IMR-90 (cell line): ENCODE measurements at regions of chr5 and their contacts with region 1.

Region 1: DNA sequence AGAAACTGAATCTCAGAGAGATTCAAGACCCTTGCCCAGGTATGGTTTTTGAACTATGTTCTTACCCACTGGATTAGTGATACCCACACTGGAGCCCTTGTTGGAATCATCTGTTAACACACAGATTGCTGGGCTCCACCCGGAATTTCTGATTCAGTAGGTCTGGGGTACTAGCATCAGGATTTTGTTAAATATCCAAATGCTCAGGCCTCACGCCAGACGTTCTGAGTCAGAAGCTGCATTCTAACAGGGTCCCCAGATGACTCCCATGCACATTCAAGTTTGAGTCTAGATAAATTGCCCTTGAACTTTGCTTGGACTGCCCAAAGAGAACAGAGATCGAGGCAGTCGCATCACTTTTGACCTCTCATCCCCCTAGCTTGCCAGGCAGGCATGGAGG is 182.0 kb upstream of the WWC1 start:
- DNase-seq: no peak
- ATAC-seq: no peak
- H3K4me3 ChIP-seq: no peak overlapping the region
- H3K27ac ChIP-seq: no peak overlapping the region
- H3K4me1 ChIP-seq: no peaks in the 10 kb centered on the region
- H3K27me3 ChIP-seq: no peaks in the 10 kb centered on the region
- CTCF ChIP-seq: no peak
- POLR2A ChIP-seq: no peak
- RAD21 ChIP-seq: no peak

Region 2: GRCh38 chr5:167920589-167920988 is 188.9 kb before region 1 on chr5:
- CTCF ChIA-PET with region 1: no interaction called
- POLR2A ChIA-PET with region 1: no interaction called
- dilution Hi-C with region 1: no loop called
- in situ Hi-C with region 1: no loop called
- intact Hi-C with region 1: no loop called
- DNase-seq: no peak
- ATAC-seq: no peak
- H3K4me3 ChIP-seq: no peak overlapping the region
- H3K27ac ChIP-seq: no peak overlapping the region
- H3K4me1 ChIP-seq: no peaks in the 10 kb centered on the region
- H3K27me3 ChIP-seq: peaks cover 2% of the 10 kb centered on the region; the same call in 1 of the 2 replicates
- CTCF ChIP-seq: no peak
- POLR2A ChIP-seq: no peak
- RAD21 ChIP-seq: no peak

Region 3: DNA sequence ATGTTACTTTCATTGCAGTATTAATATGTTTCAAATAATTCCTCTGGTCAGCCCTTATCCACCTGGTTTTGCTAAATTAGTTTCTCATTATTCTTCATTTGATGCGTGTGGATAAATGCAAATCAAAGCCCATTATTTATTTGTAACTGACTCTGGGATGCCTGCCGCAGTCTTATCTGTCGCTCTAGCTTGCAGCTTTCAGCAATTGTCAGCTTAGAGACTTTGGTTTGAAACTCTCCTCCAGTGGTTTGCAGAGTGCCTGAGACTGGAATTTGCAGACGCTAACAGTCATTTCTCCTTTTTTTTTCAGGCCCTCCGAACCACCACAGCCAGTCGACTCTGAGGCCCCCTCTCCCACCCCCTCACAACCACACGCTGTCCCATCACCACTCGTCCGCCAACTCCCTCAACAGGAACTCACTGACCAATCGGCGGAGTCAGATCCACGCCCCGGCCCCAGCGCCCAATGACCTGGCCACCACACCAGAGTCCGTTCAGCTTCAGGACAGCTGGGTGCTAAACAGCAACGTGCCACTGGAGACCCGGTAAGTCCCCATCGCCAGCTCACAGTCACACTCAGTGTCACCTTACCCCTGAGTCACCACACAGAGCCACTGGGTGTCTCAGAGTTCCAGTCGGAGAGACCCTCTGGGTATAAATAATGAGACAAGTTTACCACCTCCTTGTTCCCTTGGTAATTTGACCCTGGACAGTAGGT is 157.0 kb before region 1 on chr5:
- CTCF ChIA-PET with region 1: no interaction called
- POLR2A ChIA-PET with region 1: no interaction called
- dilution Hi-C with region 1: no loop called
- in situ Hi-C with region 1: no loop called
- intact Hi-C with region 1: no loop called
- DNase-seq: no peak
- ATAC-seq: no peak
- H3K4me3 ChIP-seq: no peak overlapping the region
- H3K27ac ChIP-seq: no peak overlapping the region
- H3K4me1 ChIP-seq: peaks cover under 1% of the 10 kb centered on the region; the same call in 1 of the 2 replicates
- H3K27me3 ChIP-seq: no peaks in the 10 kb centered on the region
- CTCF ChIP-seq: no peak
- POLR2A ChIP-seq: no peak
- RAD21 ChIP-seq: no peak

Region 4: DNA sequence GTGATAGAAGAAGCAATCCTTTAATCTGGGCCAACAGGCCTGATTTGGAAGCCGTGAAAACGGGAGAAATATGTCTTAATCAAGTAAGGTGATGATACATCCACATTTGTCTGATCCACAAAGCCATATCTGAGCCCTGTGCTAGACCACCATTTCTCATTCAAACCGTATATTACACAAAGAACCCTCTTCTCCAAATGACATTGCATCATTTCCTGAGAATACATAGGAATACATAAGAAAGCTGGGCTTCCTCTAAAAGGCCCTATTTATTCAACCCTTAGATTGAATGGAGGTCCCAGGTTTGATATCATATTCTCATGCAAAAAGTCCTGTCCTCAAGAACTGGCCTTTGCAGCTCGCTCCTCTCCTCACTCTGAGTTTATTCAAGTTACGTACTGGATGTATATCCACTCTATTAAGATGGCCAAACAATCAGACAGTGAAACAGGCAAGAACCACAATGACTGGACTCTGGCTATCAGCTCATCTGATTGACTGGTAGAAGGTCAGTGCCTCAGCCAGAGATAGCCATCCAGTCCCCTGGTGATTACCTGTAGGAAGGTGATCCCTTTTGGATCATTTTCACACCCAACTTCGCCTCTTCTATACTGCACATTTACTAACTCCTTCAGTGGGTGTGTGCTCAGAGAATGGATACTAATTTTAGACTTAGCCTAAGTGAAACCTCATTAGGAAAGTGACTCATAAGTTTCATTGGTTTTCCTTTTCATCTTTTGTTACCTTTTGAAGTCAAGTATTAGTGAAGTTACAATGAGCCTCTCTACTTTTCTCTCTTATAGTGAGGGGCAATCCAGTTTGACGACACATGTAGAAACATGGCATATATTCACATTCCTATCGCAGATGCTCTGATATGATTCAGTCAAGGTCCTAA is 14.4 kb after region 1 on chr5:
- CTCF ChIA-PET with region 1: no interaction called
- POLR2A ChIA-PET with region 1: no interaction called
- dilution Hi-C with region 1: no loop called
- in situ Hi-C with region 1: no loop called
- intact Hi-C with region 1: no loop called
- DNase-seq: no peak
- ATAC-seq: no peak
- H3K4me3 ChIP-seq: no peak overlapping the region
- H3K27ac ChIP-seq: no peak overlapping the region
- H3K4me1 ChIP-seq: no peaks in the 10 kb centered on the region
- H3K27me3 ChIP-seq: no peaks in the 10 kb centered on the region
- CTCF ChIP-seq: no peak
- POLR2A ChIP-seq: no peak
- RAD21 ChIP-seq: no peak

Region 5: DNA sequence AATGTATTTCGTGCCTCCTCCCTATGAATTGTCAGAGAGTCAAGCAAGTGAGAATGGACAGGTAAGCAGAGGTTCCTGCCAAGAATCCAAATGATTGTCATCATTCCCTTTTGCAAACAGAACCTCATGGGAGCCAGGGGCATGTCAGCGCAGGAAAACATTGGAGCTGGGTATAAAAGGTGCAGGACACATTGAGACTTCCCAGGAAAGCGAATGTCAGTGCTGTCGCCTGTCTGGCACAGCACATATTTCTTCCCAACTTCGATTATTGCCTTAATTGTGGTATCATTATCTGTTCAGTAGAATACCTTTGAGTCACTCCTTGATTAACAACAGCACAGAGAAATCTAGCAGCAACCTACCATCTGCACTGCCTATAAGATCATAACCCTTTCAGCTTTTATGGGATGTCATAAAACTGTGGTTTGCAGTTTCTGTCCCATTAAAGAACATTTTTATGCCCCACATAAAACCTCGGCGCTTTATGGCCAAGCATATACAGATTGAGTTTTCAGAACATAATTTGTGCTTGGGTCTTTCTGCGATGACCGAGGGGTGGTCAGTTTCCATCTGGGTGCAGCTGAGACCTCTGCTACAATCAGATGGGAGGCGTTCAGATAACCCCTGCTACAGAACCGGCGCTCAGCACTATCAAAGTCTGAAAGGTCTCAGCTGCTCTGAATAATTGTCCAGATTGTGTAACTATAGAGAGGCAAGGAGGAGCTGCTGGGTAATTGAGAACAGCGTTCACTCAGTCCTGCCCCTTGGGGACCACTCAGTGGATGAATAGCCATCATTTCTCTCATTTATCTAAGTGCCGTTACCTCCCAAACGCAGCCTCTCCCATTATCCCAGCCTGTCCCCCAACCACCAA is 151.1 kb after region 1 on chr5:
- CTCF ChIA-PET with region 1: no interaction called
- POLR2A ChIA-PET with region 1: no interaction called
- dilution Hi-C with region 1: no loop called
- in situ Hi-C with region 1: no loop called
- intact Hi-C with region 1: no loop called
- DNase-seq: no peak
- ATAC-seq: no peak
- H3K4me3 ChIP-seq: no peak overlapping the region
- H3K27ac ChIP-seq: no peak overlapping the region
- H3K4me1 ChIP-seq: no peaks in the 10 kb centered on the region
- H3K27me3 ChIP-seq: peaks cover 5% of the 10 kb centered on the region
- CTCF ChIP-seq: no peak
- POLR2A ChIP-seq: no peak
- RAD21 ChIP-seq: no peak

Region 6: GRCh38 chr5:169202969-169203368 is 1093.5 kb after region 1 on chr5:
- CTCF ChIA-PET with region 1: no interaction called
- POLR2A ChIA-PET with region 1: interaction called, 17 read pairs
- dilution Hi-C with region 1: no loop called
- in situ Hi-C with region 1: no loop called
- intact Hi-C with region 1: no loop called
- DNase-seq: no peak
- ATAC-seq: no peak
- H3K4me3 ChIP-seq: no peak overlapping the region
- H3K27ac ChIP-seq: no peak overlapping the region
- H3K4me1 ChIP-seq: no peaks in the 10 kb centered on the region
- H3K27me3 ChIP-seq: no peaks in the 10 kb centered on the region
- CTCF ChIP-seq: no peak
- POLR2A ChIP-seq: no peak
- RAD21 ChIP-seq: no peak